Activated B cell treated with CpG ODN at 0.5 μM for 24 hours (primary cell): ENCODE measurements at regions of chr9 and their contacts with region 1.

Region 1: GRCh38 chr9:88835038-88835466 is 156.2 kb upstream of the S1PR3 start:
- DNase-seq: no peak
- ATAC-seq: peak; percentile 74
- H3K4me3 Mint-ChIP-seq: no peak overlapping the region
- H3K27ac Mint-ChIP-seq: no peak overlapping the region
- H3K4me1 Mint-ChIP-seq: peaks cover 24% of the 10 kb centered on the region
- H3K27me3 Mint-ChIP-seq: peaks cover 22% of the 10 kb centered on the region
- CTCF ChIP-seq: no peak

Region 2: GRCh38 chr9:88927510-88927909 is 92.5 kb after region 1 on chr9:
- CTCF ChIA-PET with region 1: no interaction called
- POLR2A ChIA-PET with region 1: no interaction called
- intact Hi-C with region 1: loop called (anchors 5 kb)
- DNase-seq: no peak
- ATAC-seq: peak; percentile 79
- H3K4me3 Mint-ChIP-seq: peak overlapping the region; percentile 29
- H3K27ac Mint-ChIP-seq: peak overlapping the region; percentile 43
- H3K4me1 Mint-ChIP-seq: peaks cover 41% of the 10 kb centered on the region
- H3K27me3 Mint-ChIP-seq: peaks cover 3% of the 10 kb centered on the region
- CTCF ChIP-seq: no peak

Region 3: GRCh38 chr9:90477535-90477934 is 1642.5 kb after region 1 on chr9:
- CTCF ChIA-PET with region 1: no interaction called
- POLR2A ChIA-PET with region 1: no interaction called
- intact Hi-C with region 1: no loop called
- DNase-seq: no peak
- ATAC-seq: no peak
- H3K4me3 Mint-ChIP-seq: no peak overlapping the region
- H3K27ac Mint-ChIP-seq: no peak overlapping the region
- H3K4me1 Mint-ChIP-seq: no peaks in the 10 kb centered on the region
- H3K27me3 Mint-ChIP-seq: no peaks in the 10 kb centered on the region
- CTCF ChIP-seq: no peak